PC-9 (cell line): ENCODE measurements at regions of chr1 and their contacts with region 1.

Region 1: GRCh38 chr1:17125756-17126237 is 6.5 kb upstream of the PADI2 start:
- DNase-seq: peak; percentile 64 to 86
- H3K4me3 ChIP-seq: no peak overlapping the region
- H3K27ac ChIP-seq: peak overlapping the region; percentile 37; the same call in 1 of the 2 replicates
- H3K4me1 ChIP-seq: peaks cover 39% of the 10 kb centered on the region
- H3K27me3 ChIP-seq: no peaks in the 10 kb centered on the region
- CTCF ChIP-seq: peak; percentile 85

Region 2: DNA sequence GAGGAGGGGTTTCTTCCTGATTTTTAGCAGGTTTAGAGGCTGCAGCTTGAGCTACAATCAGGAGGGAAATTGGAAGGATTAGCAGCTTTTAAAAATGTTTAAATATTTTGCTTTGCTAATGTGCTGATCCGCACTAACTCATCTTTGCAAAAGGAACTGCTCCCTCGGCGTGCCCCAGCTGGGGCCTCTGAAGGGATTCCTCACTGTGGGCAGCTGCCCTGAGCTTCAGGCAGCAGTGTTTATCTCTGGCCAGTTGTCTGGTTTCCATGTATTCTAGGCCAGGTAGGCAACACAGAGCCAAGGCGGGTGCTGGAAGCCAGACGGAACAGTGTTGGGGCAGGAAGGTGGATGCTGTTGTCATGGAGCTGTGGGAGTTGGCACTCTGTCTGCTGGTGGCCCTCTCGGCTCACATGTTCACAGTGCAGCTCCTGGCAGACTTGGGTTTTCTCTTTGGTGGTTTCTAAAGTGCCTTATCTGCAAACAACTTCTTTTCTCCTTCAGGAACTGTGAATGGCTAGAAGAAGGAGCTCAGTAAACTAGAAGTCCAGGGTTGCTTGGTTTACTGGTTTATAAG is 666.4 kb before region 1 on chr1:
- CTCF ChIA-PET with region 1: no interaction called
- POLR2A ChIA-PET with region 1: no interaction called
- intact Hi-C with region 1: no loop called
- DNase-seq: no peak
- H3K4me3 ChIP-seq: no peak overlapping the region
- H3K27ac ChIP-seq: no peak overlapping the region
- H3K4me1 ChIP-seq: no peaks in the 10 kb centered on the region
- H3K27me3 ChIP-seq: no peaks in the 10 kb centered on the region
- CTCF ChIP-seq: no peak

Region 3: DNA sequence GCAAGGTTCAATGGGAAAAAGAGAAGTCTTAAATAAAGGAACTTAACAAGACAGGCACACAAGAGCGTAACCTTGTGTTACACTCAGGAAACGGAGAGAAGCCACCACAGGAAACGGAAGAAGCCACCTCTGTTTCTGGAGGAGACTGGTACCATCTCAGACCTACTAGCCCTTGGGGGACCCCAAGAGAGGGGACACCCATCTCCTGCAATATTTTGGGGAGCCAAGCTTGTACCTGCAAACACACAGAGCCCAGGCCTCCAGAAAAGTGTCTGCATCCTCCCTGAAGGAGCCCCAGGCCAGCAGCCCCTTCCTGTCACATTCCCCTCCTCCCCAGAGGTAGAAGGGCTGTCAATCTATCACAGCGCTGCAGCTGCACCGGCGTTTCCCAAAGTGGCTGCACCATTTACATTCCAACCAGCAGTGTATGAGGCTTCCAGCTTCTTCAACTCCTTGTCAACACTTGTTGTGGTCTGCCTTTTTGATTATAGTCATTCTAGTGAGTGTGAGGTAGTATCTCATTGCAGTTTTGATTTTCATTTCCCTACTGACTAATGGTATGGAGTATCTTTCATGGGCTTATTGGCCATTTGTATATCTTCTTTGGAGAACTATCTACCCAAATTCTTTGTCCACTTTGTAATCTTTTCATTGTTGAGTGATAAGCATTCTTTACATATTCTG is 56.1 kb after region 1 on chr1:
- CTCF ChIA-PET with region 1: no interaction called
- POLR2A ChIA-PET with region 1: interaction called, 13 read pairs
- intact Hi-C with region 1: no loop called
- DNase-seq: no peak
- H3K4me3 ChIP-seq: no peak overlapping the region
- H3K27ac ChIP-seq: no peak overlapping the region
- H3K4me1 ChIP-seq: peaks cover 4% of the 10 kb centered on the region; the same call in 1 of the 2 replicates
- H3K27me3 ChIP-seq: no peaks in the 10 kb centered on the region
- CTCF ChIP-seq: no peak

Region 4: DNA sequence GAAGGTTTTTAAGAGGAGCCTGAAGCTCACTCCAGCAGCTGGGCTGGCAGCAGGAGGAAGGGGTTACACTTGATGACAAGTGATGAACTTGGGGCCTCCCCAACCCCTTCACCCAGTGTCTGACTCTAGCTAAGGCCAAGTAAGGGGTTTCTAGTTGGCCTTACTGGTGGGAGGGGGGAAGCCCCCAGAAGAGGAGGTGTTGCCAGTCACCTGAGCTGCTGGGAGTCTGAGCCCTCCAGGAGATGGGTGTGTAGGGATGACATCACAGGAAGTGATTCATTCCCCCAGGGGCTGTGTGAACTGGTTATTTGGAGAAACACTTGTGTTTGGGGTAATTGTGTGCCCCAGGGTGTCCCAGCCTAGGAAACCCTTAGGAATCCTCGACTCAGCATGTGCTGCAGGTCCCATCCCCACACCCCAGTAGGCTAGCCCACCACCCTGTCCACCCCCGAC is 82.2 kb after region 1 on chr1:
- CTCF ChIA-PET with region 1: interaction called, 3 read pairs
- POLR2A ChIA-PET with region 1: interaction called, 13 read pairs
- intact Hi-C with region 1: no loop called
- DNase-seq: peak; percentile 81 to 83
- H3K4me3 ChIP-seq: peak overlapping the region; percentile 65; the same call in 1 of the 2 replicates
- H3K27ac ChIP-seq: peak overlapping the region; percentile 95
- H3K4me1 ChIP-seq: peaks cover 87% of the 10 kb centered on the region
- H3K27me3 ChIP-seq: no peaks in the 10 kb centered on the region
- CTCF ChIP-seq: no peak

Region 5: DNA sequence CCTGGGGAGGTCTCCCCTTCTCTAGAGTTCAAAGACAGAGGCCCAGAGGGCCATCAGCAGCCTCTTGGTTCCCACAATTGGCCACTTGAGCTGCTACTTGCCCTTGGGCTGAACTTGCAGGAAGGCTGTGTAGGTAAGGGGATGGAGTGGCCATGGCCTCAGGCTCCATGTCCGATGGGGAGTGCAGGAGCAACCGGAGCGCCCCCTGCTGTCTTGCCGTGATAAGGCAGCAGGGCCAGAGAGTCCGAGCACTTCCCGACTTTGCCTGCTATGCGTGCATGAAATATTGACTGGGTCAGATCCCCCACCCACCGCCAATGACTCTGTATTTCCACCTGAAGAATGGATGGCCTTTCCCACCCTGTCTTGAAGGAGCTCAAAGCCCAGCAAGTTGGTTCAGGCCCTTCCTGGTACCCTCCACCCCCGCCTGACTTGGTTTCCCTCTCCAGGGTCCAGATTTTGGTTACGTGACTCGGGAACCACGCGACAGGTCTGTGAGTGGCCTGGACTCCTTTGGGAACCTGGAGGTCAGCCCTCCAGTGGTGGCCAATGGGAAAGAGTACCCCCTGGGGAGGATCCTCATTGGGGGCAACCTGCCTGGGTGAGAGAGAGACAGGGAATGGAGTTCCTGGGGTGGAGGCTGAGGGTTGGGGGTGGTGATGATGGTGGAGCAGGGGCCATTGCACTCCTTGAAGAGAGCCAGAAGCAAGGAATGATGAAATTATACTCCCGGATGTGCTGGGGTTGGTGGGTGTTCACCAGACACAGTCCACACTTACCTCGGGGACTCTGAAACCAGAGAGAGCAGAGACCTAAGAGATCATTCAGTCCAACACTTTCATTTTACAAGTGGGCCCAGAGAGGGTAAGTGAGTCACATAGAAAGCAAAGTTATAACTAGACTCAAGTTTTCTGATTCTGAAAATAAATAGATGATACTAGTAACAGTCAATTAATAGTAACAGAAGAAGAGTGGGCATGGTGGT is 148.7 kb after region 1 on chr1:
- CTCF ChIA-PET with region 1: interaction called, 3 read pairs
- POLR2A ChIA-PET with region 1: interaction called, 6 read pairs
- intact Hi-C with region 1: loop called (anchors 1 kb)
- DNase-seq: peak; percentile 37 to 71
- H3K4me3 ChIP-seq: no peak overlapping the region
- H3K27ac ChIP-seq: no peak overlapping the region
- H3K4me1 ChIP-seq: peaks cover 24% of the 10 kb centered on the region
- H3K27me3 ChIP-seq: no peaks in the 10 kb centered on the region
- CTCF ChIP-seq: peak; percentile 75

Region 6: GRCh38 chr1:17439250-17440073 is 313.7 kb after region 1 on chr1 and contains the start of gene RCC2:
- CTCF ChIA-PET with region 1: interaction called, 10 read pairs
- POLR2A ChIA-PET with region 1: no interaction called
- intact Hi-C with region 1: no loop called
- DNase-seq: peak; percentile 38 to 57
- H3K4me3 ChIP-seq: peak within 1 kb of the TSS; percentile 96
- H3K27ac ChIP-seq: peak within 1 kb of the TSS; percentile 100
- H3K4me1 ChIP-seq: peaks cover 25% of the 10 kb centered on the region
- H3K27me3 ChIP-seq: no peaks in the 10 kb centered on the region
- CTCF ChIP-seq: no peak
- total RNA-seq, gene RCC2: 158 and 170 TPM in 2 replicates